GM23248 (cell line): ENCODE measurements at regions of chr13 and their contacts with region 1.

Region 1: GRCh38 chr13:51070005-51070649 is 40.9 kb downstream of the C13orf42 start:
- DNase-seq: peak; percentile 82
- H3K4me3 ChIP-seq: no peak overlapping the region
- H3K27ac ChIP-seq: no peak overlapping the region
- H3K4me1 ChIP-seq: no peaks in the 10 kb centered on the region
- H3K27me3 ChIP-seq: peaks cover 3% of the 10 kb centered on the region; the same call in 1 of the 2 replicates

Region 2: DNA sequence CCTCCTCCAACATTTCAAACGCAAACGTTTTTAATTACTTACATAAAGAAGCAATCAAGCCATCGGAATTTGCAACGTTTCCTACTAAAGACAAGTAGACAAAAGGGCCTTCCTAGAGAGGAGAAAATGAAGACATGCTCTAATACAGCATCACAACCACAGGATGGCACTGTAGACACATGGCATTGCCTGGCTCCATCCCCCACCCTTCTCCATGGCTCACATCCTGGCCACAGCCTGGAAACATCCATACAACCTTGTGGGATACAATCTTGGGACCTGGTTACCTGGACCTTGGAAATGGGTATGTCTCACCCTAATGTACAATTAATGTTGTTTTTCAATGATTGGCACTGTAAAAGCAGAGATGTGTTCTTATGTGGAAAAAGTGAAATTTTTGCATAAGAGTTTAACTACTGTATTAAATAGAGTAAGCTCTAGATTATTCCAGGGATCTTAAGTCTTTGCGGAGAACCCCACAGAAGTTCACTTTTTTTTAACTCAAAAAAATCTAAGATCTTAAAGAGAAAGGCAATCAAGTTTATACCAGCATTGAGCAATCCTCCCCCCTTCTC is 1400.3 kb before region 1 on chr13:
- in situ Hi-C with region 1: loop called (anchors 25 kb)
- DNase-seq: peak; percentile 81
- H3K4me3 ChIP-seq: no peak overlapping the region
- H3K27ac ChIP-seq: no peak overlapping the region
- H3K4me1 ChIP-seq: peaks cover 7% of the 10 kb centered on the region; the same call in 1 of the 2 replicates
- H3K27me3 ChIP-seq: no peaks in the 10 kb centered on the region

Region 3: GRCh38 chr13:49954674-49955491 is 1115.2 kb before region 1 on chr13:
- in situ Hi-C with region 1: loop called (anchors 25 kb)
- DNase-seq: peak; percentile 12
- H3K4me3 ChIP-seq: no peak overlapping the region
- H3K27ac ChIP-seq: no peak overlapping the region
- H3K4me1 ChIP-seq: no peaks in the 10 kb centered on the region
- H3K27me3 ChIP-seq: no peaks in the 10 kb centered on the region

Region 4: GRCh38 chr13:50038266-50038665 is 1031.9 kb before region 1 on chr13:
- in situ Hi-C with region 1: no loop called
- DNase-seq: no peak
- H3K4me3 ChIP-seq: no peak overlapping the region
- H3K27ac ChIP-seq: no peak overlapping the region
- H3K4me1 ChIP-seq: peaks cover 8% of the 10 kb centered on the region; the same call in 1 of the 2 replicates
- H3K27me3 ChIP-seq: no peaks in the 10 kb centered on the region

Region 5: DNA sequence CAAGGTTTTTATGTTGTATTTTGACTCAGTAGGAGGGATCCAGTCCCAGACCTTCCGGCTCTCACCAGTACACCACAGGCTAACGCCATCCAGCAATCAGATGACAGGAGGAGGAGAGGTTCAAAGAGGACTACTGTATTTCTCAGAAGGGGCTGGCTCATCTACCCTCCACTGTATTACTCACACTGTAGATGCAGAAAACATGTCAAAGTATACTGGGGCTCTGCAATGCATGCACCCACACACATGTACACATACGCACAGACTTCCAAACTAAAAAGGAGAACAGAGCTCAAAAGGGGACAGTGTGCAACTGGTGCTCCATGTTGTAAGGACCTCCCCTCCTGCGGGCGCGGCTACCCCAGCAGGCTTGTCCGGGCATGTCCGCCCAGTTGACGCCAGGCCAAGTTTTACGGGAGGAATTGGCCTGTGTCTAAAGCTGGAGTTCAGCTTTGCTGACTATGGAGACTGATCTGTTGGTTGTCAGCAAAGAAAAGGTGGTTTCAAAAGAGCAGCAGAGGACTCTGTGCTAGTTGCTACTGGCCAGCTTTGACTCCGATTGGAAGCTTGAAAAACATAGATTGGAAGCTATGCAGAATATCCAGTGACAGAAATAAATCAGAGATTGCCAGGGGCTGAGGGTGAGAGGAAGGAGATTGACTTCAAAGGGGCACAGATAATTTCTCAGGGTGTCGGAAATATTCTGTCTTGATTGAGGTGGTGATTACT is 540.8 kb before region 1 on chr13:
- in situ Hi-C with region 1: loop called (anchors 25 kb)
- DNase-seq: peak; percentile 92
- H3K4me3 ChIP-seq: peak overlapping the region; percentile 47
- H3K27ac ChIP-seq: peak overlapping the region; percentile 86
- H3K4me1 ChIP-seq: peaks cover 31% of the 10 kb centered on the region
- H3K27me3 ChIP-seq: no peaks in the 10 kb centered on the region

Region 6: DNA sequence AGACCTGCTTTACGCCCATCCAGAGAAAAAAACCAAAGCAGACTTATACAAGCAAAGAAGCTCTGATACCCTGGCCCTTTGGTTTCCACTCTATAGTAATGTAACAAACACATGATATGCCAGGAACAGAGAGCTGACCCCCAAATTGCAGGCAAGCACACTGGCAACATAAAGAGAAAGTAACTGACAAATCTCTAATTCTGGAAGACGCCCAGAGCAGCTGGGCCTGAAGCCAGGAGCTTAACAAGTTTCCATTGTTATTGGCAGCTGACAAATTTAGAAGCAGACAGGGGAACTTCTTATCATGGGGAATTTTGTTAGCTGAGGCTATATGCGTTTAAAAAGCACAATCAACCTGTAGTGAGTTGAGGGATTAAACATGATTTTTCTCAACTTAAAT is 384.6 kb before region 1 on chr13:
- in situ Hi-C with region 1: no loop called
- DNase-seq: peak; percentile 40
- H3K4me3 ChIP-seq: no peak overlapping the region
- H3K27ac ChIP-seq: no peak overlapping the region
- H3K4me1 ChIP-seq: peaks cover 22% of the 10 kb centered on the region
- H3K27me3 ChIP-seq: no peaks in the 10 kb centered on the region

Region 7: GRCh38 chr13:50760751-50761150 is 309.4 kb before region 1 on chr13:
- in situ Hi-C with region 1: no loop called
- DNase-seq: no peak
- H3K4me3 ChIP-seq: no peak overlapping the region
- H3K27ac ChIP-seq: no peak overlapping the region
- H3K4me1 ChIP-seq: 0 out of 2 replicates have a peak, but pooled peaks cover 6% of the 10 kb centered on the region
- H3K27me3 ChIP-seq: no peaks in the 10 kb centered on the region

Region 8: DNA sequence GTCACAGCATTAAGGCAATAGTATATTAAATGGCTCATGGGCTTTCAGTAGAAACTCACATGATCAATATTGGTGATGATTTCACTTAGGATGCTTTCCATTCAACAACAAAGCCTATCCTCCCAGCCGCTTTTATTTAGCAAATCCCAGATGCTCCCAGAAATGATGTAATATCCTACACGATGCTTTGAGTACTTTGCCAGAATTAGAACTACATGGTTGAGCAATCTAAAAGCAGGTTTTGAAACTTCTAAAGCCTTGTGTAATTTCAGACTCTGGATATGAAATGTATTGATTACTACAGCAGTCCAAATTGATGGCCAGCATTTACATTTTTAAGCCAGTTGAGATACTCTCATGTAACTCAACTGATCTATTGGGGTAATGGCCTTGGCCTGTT is 240.2 kb before region 1 on chr13:
- in situ Hi-C with region 1: loop called (anchors 10 kb)
- DNase-seq: peak; percentile 75
- H3K4me3 ChIP-seq: no peak overlapping the region
- H3K27ac ChIP-seq: no peak overlapping the region
- H3K4me1 ChIP-seq: no peaks in the 10 kb centered on the region
- H3K27me3 ChIP-seq: no peaks in the 10 kb centered on the region